GM10248 (cell line): ENCODE measurements at regions of chr15 and their contacts with region 1.

Region 1: DNA sequence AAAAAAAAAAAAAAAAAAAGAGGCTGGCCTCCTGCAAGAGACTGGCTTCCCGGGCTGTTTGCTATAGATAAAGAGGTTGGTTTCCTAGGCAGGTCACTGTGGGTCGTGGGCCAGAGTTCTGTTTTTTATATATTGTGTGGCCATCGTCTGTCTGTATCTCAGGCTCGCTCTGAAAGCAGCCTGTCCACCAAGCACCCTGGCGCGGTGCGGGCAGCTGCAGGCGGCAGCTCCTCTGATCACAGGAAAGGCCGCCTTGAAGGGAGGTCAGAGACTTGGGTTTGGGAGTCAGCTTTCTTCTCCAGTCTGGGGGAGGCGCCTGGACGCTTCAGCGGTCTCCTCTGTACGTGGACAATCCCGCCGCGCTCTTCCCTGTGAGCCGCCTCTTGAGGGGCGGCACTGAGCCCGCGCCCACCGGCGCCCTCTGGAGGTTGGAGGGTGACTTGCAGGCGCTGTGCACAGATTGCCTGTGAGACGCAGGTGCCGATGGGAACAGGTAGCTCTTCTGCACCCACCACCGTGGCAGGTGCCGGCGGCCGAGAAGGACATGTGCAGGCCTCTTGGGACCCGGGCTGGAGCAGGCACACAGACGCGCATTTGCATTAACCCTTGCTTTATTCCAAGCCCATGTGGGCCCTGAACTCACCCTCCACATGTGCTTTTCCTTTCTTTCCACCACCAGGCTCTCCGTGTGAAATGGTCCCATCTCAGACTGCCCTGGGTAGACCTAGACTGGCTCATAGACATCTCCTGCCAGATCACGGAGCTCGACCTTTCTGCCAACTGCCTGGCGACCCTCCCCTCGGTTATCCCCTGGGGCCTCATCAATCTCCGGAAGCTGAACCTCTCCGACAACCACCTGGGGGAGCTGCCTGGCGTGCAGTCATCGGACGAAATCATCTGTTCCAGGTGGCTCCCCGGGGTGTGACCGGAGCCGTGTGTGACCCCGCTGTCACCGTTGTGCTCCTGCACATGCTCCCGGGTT is 89.3 kb downstream of the LRRK1 start:
- DNase-seq: peak; percentile 90
- CTCF ChIP-seq: peak; percentile 97

Region 2: DNA sequence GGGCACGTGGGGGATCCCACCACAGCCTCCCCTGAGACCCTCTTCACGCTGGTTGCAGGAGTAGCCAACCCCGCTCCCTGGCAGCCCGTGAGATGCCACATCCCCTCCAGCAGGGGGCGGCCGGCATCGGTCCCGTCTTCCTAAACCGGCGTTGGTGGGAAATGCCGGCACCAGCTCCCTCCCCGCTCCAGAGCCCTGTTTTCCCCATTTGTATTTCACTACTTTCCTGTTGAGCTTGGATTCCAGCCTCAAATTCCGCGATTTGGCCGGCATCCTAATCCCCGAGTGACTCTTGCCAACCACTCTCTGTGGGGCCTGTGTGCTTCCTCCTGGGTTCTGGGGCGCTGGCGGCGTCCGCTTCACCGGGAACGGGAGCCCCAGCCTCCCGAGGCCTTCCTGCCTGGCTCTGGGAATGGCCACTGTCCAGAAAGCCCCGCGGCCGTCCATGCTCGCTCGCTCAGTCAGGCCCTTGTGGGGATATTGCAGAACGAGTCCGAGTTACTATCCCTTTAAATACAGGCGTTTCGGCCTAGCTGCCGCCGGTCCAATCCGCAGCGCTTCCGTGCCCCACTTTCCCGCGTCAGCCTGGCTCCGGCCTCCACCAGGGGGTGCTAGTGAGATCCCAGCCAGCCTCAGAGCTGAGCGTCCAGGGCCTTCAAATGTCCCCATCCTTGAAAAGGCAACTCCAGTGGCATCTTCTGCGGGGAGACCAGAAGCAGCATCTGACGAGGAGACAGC is 658.6 kb before region 1 on chr15:
- CTCF ChIA-PET with region 1: interaction called, 18 read pairs
- POLR2A ChIA-PET with region 1: no interaction called
- DNase-seq: peak; percentile 77
- CTCF ChIP-seq: peak; percentile 81

Region 3: DNA sequence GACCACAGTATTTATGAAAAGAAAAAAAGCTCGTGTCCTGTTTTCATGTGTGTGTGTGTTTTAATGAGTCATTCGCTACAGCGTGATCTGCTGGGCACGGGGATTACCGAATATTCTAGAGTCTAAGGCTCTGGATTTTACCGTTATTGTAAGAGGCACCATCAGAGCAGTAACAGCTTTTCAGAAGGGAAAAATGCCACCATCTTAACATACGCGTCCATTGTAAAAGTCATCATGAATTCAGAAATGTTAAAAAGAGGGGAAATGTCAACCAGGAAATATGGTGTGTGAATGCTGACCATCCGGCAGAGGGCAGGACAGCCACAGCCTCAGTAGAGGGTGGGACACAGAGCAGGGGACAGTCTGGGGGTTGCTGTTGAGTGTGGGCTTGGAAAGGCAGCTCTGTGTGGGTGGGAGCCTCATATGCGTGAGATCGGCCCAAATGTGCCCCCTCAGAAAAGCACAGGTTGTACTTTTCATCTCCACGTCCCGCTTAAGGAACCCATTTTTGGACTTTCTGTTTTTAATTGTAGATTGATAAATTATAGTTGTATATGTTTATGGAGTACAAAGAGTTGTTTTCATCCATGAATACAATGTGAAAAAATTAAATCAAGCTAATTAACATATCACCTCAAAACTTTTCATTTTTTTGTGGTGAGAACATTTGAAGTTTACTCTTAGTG is 336.4 kb before region 1 on chr15:
- CTCF ChIA-PET with region 1: interaction called, 13 read pairs
- POLR2A ChIA-PET with region 1: no interaction called
- DNase-seq: peak; percentile 48
- CTCF ChIP-seq: peak; percentile 59

Region 4: DNA sequence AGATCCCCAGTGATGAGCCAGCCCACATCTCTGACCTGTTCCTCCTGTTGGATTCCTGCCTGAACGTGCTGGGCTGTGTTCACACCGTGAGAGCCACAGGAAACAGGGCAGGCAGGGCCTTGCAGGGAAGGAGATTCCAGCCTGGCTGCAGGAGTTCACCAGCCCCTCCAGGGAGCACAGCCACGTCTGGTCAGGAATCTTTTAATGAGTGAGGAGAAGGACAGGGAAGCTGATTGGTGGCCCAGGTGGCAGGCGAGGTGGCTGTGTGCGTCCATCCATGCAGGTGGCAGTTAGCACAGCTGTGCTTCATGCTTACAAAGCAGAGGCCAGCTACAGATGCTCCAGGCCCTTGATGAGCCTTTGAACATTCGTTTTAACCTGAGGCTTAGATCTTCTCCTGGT is 78.8 kb before region 1 on chr15:
- CTCF ChIA-PET with region 1: interaction called, 550 read pairs
- POLR2A ChIA-PET with region 1: no interaction called
- DNase-seq: peak; percentile 49
- CTCF ChIP-seq: no peak

Region 5: DNA sequence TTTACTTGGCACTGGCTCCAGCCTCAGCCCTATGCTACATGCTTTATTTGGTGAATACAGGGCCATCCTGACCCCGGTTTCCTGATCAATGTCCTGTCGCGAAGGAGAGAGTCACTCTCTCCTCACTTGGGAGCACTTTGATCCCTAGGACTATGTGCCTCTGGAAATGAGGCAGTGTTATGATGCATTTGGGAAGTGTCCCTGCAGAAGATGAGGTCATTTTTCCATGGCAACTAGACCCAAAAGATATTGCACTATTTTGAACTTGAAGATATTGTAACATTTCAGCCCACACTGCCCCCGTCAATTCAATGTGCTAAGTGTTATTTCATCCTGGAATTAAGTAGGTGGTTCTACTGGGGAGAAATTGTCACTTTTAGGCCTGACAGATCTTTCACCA is 21.3 kb before region 1 on chr15:
- CTCF ChIA-PET with region 1: interaction called, 125 read pairs
- POLR2A ChIA-PET with region 1: no interaction called
- DNase-seq: no peak
- CTCF ChIP-seq: no peak

Region 6: DNA sequence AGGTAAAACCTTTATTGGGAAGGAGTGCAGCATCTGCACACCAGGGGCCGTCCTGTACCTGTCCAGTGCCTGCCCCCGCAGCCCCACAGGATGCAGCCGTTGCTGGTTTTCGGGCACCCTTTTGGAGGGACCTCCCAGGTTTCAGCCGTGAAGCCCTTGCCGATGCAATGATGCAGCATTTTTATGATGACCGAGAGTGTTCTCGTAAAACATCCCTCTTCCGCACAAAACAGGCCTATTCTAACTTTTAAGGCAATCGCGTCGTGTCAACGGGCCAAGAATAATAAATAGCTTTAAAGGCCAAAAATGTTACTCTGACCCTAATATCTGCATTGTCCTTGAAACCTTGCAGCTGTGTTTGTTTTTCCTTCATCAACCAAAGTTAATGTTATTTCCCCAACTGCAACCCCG is 36.8 kb after region 1 on chr15:
- CTCF ChIA-PET with region 1: interaction called, 27 read pairs
- POLR2A ChIA-PET with region 1: no interaction called
- DNase-seq: no peak
- CTCF ChIP-seq: no peak

Region 7: DNA sequence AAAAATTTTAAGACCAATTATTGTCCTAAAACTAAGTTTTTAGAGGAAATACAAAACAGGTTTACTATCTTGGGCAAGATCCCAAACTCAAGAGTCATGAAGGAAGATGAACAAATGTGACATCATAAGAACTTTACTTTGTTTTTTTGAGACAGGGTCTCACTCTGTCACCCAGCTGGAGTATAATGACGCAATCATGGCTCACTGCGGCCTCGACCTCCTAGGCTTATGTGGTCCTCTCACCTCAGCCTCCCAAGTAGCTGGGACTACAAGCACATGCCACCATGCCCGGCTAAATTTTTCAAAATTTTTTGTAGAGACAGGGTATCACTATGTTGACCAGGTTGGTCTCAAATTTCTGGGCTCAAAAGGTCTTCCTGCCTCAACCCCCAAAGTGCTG is 411.8 kb after region 1 on chr15:
- CTCF ChIA-PET with region 1: no interaction called
- POLR2A ChIA-PET with region 1: no interaction called
- DNase-seq: no peak
- CTCF ChIP-seq: no peak